Esophagus squamous epithelium (tissue), 5 donors: ENCODE measurements at regions of chr3 and their contacts with region 1.

Region 1: DNA sequence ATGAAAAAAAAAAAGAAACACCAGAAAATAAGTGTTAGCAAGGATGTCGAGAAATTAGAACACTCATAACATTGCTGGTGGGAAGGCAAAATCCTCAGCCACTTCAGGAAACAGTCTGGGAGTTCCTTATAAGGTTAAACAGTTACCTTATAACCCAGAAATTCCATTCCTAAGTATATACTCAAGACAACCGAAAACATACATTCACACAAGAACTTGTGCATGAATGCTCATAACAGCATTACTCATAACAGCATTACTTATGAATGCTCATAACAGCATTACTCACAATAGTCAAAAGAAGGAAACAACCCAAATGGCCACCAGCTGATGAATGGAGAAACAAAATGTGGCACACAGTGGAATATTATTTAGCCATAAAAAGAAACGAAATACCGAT is 34.8 kb upstream of the DCP1A start:
- DNase-seq: no peak
- H3K4me3 ChIP-seq: no peak overlapping the region
- H3K27ac ChIP-seq: no peak overlapping the region
- H3K4me1 ChIP-seq: no peaks in the 10 kb centered on the region
- H3K27me3 ChIP-seq: peaks cover 0 to 14% (median 0%) of the 10 kb centered on the region in 4 donors
- CTCF ChIP-seq: no peak
- POLR2A ChIP-seq: no peak

Region 2: GRCh38 chr3:53486961-53487654 is 105.0 kb after region 1 on chr3:
- intact Hi-C with region 1: no loop called
- DNase-seq: no peak
- H3K4me3 ChIP-seq: no peak overlapping the region
- H3K27ac ChIP-seq: no peak overlapping the region
- H3K4me1 ChIP-seq: no peaks in the 10 kb centered on the region
- H3K27me3 ChIP-seq: peaks cover 0 to 21% (median 0%) of the 10 kb centered on the region in 4 donors
- CTCF ChIP-seq: no peak
- POLR2A ChIP-seq: no peak

Region 3: GRCh38 chr3:53715815-53716483 is 333.8 kb after region 1 on chr3:
- intact Hi-C with region 1: loop called (anchors 5 kb)
- DNase-seq: no peak
- H3K4me3 ChIP-seq: no peak overlapping the region
- H3K27ac ChIP-seq: no peak overlapping the region
- H3K4me1 ChIP-seq: peaks cover 0 to 21% (median 0%) of the 10 kb centered on the region in 3 donors
- H3K27me3 ChIP-seq: peaks cover 0 to 11% (median 0%) of the 10 kb centered on the region in 4 donors
- CTCF ChIP-seq: no peak
- POLR2A ChIP-seq: no peak